ENCODE measurements at regions of chr12 and their contacts with region 1.

Region 1: DNA sequence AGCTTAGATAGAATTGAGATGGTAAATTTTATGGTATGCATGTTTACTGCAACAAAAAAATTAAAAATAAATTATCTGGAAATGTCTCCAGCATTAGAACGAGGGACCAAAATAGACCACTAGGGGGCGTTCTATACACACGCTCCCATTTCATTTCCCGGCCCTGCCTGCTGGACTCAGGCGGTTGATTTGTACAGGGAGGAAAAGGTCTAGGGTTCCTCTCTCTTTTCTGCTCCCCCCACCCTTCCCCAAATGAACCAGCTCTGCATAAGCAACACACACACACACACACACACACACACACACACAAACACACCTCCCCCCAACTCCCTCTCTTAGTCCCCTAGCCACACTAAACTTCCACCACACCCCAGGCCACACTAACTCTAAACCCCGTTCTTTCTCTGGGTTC is 7.8 kb upstream of the DTX1 start:
- DNase-seq: peak; percentile 74 to 80 (median 74)
- ATAC-seq: peak; percentile 99
- H3K4me3 ChIP-seq: no peak overlapping the region
- H3K27ac ChIP-seq: no peak overlapping the region
- H3K4me1 ChIP-seq: no peaks in the 10 kb centered on the region; a peak in 1 of 5 replicates
- H3K27me3 ChIP-seq: peaks cover 0 to 14% of the 10 kb centered on the region in 2 experiments; a peak in 2 of 5 replicates
- CTCF ChIP-seq: peak; percentile 76 to 94 (median 83)
- EP300 ChIP-seq: no peak
- POLR2A ChIP-seq: no peak
- RAD21 ChIP-seq: peak; percentile 78 to 86

Region 2: DNA sequence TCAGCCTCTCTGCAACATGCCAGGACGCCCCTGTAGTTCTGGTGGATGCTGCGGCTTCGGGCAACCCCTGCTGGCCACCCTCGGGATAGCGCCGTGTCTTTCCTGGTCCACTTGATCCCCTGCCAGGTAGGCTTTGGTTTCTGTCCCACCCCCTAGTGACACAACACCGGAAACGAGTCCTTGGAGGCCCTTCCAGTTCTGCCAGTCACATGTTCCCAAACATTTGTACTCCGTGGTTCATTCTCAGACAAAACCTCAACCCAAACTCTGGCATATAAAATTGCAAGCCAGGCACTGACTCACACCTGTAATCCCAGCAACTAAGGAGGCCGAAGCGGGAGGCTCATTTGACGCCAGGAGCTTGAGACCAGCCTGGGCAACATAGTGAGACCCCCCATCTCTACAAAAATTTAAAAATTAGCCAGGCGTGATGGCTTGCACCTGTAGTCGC is 49.7 kb after region 1 on chr12:
- CTCF ChIA-PET with region 1: interaction called, 7 read pairs
- POLR2A ChIA-PET with region 1: interaction called, 3 read pairs
- in situ Hi-C with region 1: no loop called
- intact Hi-C with region 1: loop called (anchors 1 kb)
- DNase-seq: peak; percentile 78 to 87 (median 84)
- ATAC-seq: peak; percentile 92
- H3K4me3 ChIP-seq: no peak overlapping the region
- H3K27ac ChIP-seq: no peak overlapping the region
- H3K4me1 ChIP-seq: peaks cover 0 to 18% of the 10 kb centered on the region in 2 experiments; a peak in 3 of 5 replicates
- H3K27me3 ChIP-seq: peaks cover 0 to 24% of the 10 kb centered on the region in 2 experiments; a peak in 3 of 5 replicates
- CTCF ChIP-seq: peak; percentile 86 to 92 (median 87)
- EP300 ChIP-seq: no peak
- POLR2A ChIP-seq: no peak
- RAD21 ChIP-seq: peak; percentile 35 to 86; a peak in 3 of 4 replicates

Region 3: GRCh38 chr12:113152835-113153814 is 104.4 kb after region 1 on chr12:
- CTCF ChIA-PET with region 1: interaction called, 8 read pairs
- POLR2A ChIA-PET with region 1: no interaction called
- in situ Hi-C with region 1: no loop called
- intact Hi-C with region 1: loop called (anchors 1 kb)
- DNase-seq: peak; percentile 75 to 84 (median 80)
- ATAC-seq: peak; percentile 95
- H3K4me3 ChIP-seq: peak overlapping the region; percentile 42
- H3K27ac ChIP-seq: no peak overlapping the region
- H3K4me1 ChIP-seq: peaks cover 5 to 29% of the 10 kb centered on the region in 2 experiments; a peak in 3 of 5 replicates
- H3K27me3 ChIP-seq: peaks cover 18 to 32% of the 10 kb centered on the region in 2 experiments
- CTCF ChIP-seq: peak; percentile 67 to 75 (median 73)
- EP300 ChIP-seq: no peak
- POLR2A ChIP-seq: no peak
- RAD21 ChIP-seq: peak; percentile 51 to 82

Region 4: GRCh38 chr12:113174461-113175384 is 126.0 kb after region 1 on chr12:
- CTCF ChIA-PET with region 1: interaction called, 21 read pairs
- POLR2A ChIA-PET with region 1: no interaction called
- in situ Hi-C with region 1: loop called (anchors 5 kb)
- intact Hi-C with region 1: loop called (anchors 1 kb)
- DNase-seq: peak; percentile 73 to 84 (median 76)
- ATAC-seq: peak; percentile 97
- H3K4me3 ChIP-seq: no peak overlapping the region
- H3K27ac ChIP-seq: no peak overlapping the region
- H3K4me1 ChIP-seq: peaks cover 0 to 6% of the 10 kb centered on the region in 2 experiments; a peak in 2 of 5 replicates
- H3K27me3 ChIP-seq: no peaks in the 10 kb centered on the region
- CTCF ChIP-seq: peak; percentile 93 to 97 (median 94)
- EP300 ChIP-seq: no peak
- POLR2A ChIP-seq: no peak
- RAD21 ChIP-seq: peak; percentile 51 to 74